ENCODE measurements at regions of chr16 and their contacts with region 1.

Region 1: GRCh38 chr16:56743840-56744239 is 13.9 kb downstream of the NUP93 start:
- DNase-seq: no peak
- ATAC-seq: no peak
- H3K4me3 ChIP-seq: no peak overlapping the region
- H3K27ac ChIP-seq: no peak overlapping the region
- H3K4me1 ChIP-seq: peaks cover 7% of the 10 kb centered on the region
- H3K27me3 ChIP-seq: no peaks in the 10 kb centered on the region
- CTCF ChIP-seq: no peak

Region 2: GRCh38 chr16:56419740-56420548 is 323.9 kb before region 1 on chr16:
- CTCF ChIA-PET with region 1: no interaction called
- POLR2A ChIA-PET with region 1: interaction called, 10 read pairs
- in situ Hi-C with region 1: no loop called
- intact Hi-C with region 1: no loop called
- DNase-seq: no peak
- ATAC-seq: no peak
- H3K4me3 ChIP-seq: no peak overlapping the region
- H3K27ac ChIP-seq: no peak overlapping the region
- H3K4me1 ChIP-seq: peaks cover 23% of the 10 kb centered on the region
- H3K27me3 ChIP-seq: no peaks in the 10 kb centered on the region
- CTCF ChIP-seq: peak; percentile 11; the same call in 1 of the 2 replicates

Region 3: DNA sequence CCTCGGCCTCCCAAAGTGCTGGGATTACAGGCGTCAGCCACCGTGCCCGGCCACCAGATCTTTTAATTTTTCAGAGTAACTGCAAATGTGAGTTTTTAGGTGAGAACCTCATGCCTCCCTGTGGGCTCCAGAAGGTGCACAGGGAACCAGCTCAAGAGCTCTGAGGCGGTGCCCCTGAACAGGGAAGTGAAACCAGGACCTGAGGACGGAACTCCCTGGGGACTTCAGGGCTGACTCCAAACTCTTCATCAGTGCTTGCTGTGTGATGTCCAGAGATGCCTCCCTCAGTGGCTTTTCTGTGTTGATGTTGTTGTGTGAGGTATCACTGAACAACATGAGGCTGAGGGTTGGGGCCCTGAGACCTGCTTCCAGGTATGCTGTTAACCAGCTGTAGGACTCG is 145.0 kb after region 1 on chr16:
- CTCF ChIA-PET with region 1: no interaction called
- POLR2A ChIA-PET with region 1: no interaction called
- in situ Hi-C with region 1: no loop called
- intact Hi-C with region 1: no loop called
- DNase-seq: no peak
- ATAC-seq: no peak
- H3K4me3 ChIP-seq: no peak overlapping the region
- H3K27ac ChIP-seq: no peak overlapping the region
- H3K4me1 ChIP-seq: no peaks in the 10 kb centered on the region
- H3K27me3 ChIP-seq: no peaks in the 10 kb centered on the region
- CTCF ChIP-seq: no peak

Measured in Panc1 (cell line).